ENCODE measurements at regions of chr14 and their contacts with region 1.

Region 1: GRCh38 chr14:49585803-49586672 is at the start of gene RPS29:
- DNase-seq: peak; percentile 99
- H3K4me3 Mint-ChIP-seq: peak within 1 kb of the TSS; percentile 80
- H3K27ac Mint-ChIP-seq: peak within 1 kb of the TSS; percentile 100
- H3K4me1 Mint-ChIP-seq: peaks cover 49% of the 10 kb centered on the region
- H3K27me3 Mint-ChIP-seq: no peaks in the 10 kb centered on the region
- total RNA-seq, gene RPS29: 860 to 1,679 TPM

Region 2: DNA sequence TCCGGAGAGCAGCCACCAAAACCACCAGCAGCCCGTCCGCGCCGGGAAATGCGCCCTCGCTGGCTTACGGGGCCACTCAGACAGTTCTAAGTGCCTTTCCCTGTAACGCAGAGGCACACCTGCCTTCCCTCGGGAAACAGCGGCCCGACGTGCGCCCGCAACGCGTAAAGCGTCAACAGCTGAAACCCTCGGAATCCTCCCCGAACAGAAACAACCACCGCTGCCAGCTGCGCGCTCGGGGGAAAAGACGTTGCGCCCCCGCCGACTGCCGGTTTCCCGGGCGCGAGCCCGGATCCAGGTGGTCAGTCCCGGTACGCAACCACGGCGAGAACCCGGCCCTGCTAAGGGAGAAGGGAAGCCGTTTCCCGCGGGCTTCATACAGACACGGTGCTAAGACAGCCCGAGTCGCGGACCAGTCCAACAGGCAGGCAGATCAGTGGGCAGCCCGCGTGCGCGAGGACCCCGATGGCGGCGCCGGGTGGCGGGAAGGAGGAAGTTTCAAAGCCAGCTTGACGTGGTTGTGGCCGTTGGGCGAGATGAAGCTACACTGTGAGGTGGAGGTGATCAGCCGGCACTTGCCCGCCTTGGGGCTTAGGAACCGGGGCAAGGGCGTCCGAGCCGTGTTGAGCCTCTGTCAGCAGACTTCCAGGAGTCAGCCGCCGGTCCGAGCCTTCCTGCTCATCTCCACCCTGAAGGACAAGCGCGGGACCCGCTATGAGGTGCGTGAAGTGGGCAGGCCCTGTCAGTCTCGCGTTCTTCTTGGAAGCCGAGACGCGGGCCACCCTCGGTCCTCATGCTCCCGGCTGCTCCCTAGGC is 12.7 kb after region 1 on chr14 and contains the start of gene LRR1:
- CTCF ChIA-PET with region 1: interaction called, 30 read pairs
- POLR2A ChIA-PET with region 1: interaction called, 5 read pairs
- DNase-seq: peak; percentile 87
- H3K4me3 Mint-ChIP-seq: peak within 1 kb of the TSS; percentile 99
- H3K27ac Mint-ChIP-seq: peak within 1 kb of the TSS; percentile 100
- H3K4me1 Mint-ChIP-seq: peaks cover 42% of the 10 kb centered on the region
- H3K27me3 Mint-ChIP-seq: peaks cover 2% of the 10 kb centered on the region
- total RNA-seq, gene LRR1: 45.5 to 53.2 TPM

Region 3: GRCh38 chr14:49620182-49621113 is 34.4 kb after region 1 on chr14 and contains the starts of genes MGAT2 and RPL36AL:
- CTCF ChIA-PET with region 1: interaction called, 17 read pairs
- POLR2A ChIA-PET with region 1: interaction called, 18 read pairs
- DNase-seq: peak; percentile 96
- H3K4me3 Mint-ChIP-seq: peak within 1 kb of the TSS; percentile 97
- H3K27ac Mint-ChIP-seq: peak within 1 kb of the TSS; percentile 97
- H3K4me1 Mint-ChIP-seq: peaks cover 50% of the 10 kb centered on the region
- H3K27me3 Mint-ChIP-seq: no peaks in the 10 kb centered on the region
- total RNA-seq, gene MGAT2: 53.1 to 57.3 TPM
- total RNA-seq, gene RPL36AL: 249 to 262 TPM